ENCODE measurements at regions of chr12 and their contacts with region 1.

Region 1: GRCh38 chr12:124603100-124603541 is 35.7 kb upstream of the NCOR2 start:
- DNase-seq: no peak
- H3K4me3 ChIP-seq: no peak overlapping the region
- H3K27ac ChIP-seq: no peak overlapping the region
- H3K4me1 ChIP-seq: peaks cover 5% of the 10 kb centered on the region
- H3K27me3 ChIP-seq: no peaks in the 10 kb centered on the region
- CTCF ChIP-seq: no peak

Region 2: GRCh38 chr12:124347716-124348357 is 255.3 kb before region 1 on chr12:
- CTCF ChIA-PET with region 1: no interaction called
- dilution Hi-C with region 1: no loop called
- in situ Hi-C with region 1: no loop called
- intact Hi-C with region 1: no loop called
- DNase-seq: no peak
- H3K4me3 ChIP-seq: no peak overlapping the region
- H3K27ac ChIP-seq: no peak overlapping the region
- H3K4me1 ChIP-seq: no peaks in the 10 kb centered on the region
- H3K27me3 ChIP-seq: no peaks in the 10 kb centered on the region
- CTCF ChIP-seq: peak in 1 of 2 donors; percentile 50

Region 3: GRCh38 chr12:124520265-124520701 is 82.8 kb before region 1 on chr12:
- CTCF ChIA-PET with region 1: no interaction called
- dilution Hi-C with region 1: loop called (anchors 5 kb)
- in situ Hi-C with region 1: no loop called
- intact Hi-C with region 1: no loop called
- DNase-seq: peak; percentile 87
- H3K4me3 ChIP-seq: no peak overlapping the region
- H3K27ac ChIP-seq: peak overlapping the region; percentile 90
- H3K4me1 ChIP-seq: peaks cover 89% of the 10 kb centered on the region
- H3K27me3 ChIP-seq: no peaks in the 10 kb centered on the region
- CTCF ChIP-seq: no peak